Caco-2 (cell line): ENCODE measurements at regions of chr7 and their contacts with region 1.

Region 1: GRCh38 chr7:85890244-85890811 is 703.5 kb upstream of the SEMA3D start:
- DNase-seq: no peak
- H3K4me3 ChIP-seq: no peak overlapping the region
- H3K4me3 Mint-ChIP-seq: no peak overlapping the region
- H3K27ac Mint-ChIP-seq: no peak overlapping the region
- H3K4me1 ChIP-seq: no peaks in the 10 kb centered on the region
- H3K4me1 Mint-ChIP-seq: no peaks in the 10 kb centered on the region
- H3K27me3 ChIP-seq: no peaks in the 10 kb centered on the region
- H3K27me3 Mint-ChIP-seq: peaks cover 3% of the 10 kb centered on the region
- CTCF ChIP-seq: peak; percentile 42 to 52

Region 2: GRCh38 chr7:85997515-85997914 is 107.2 kb after region 1 on chr7:
- CTCF ChIA-PET with region 1: no interaction called
- POLR2A ChIA-PET with region 1: no interaction called
- intact Hi-C with region 1: no loop called
- DNase-seq: no peak
- H3K4me3 ChIP-seq: no peak overlapping the region
- H3K4me3 Mint-ChIP-seq: no peak overlapping the region
- H3K27ac Mint-ChIP-seq: no peak overlapping the region
- H3K4me1 ChIP-seq: no peaks in the 10 kb centered on the region
- H3K4me1 Mint-ChIP-seq: no peaks in the 10 kb centered on the region
- H3K27me3 ChIP-seq: no peaks in the 10 kb centered on the region
- H3K27me3 Mint-ChIP-seq: no peaks in the 10 kb centered on the region
- CTCF ChIP-seq: no peak

Region 3: GRCh38 chr7:86469680-86470295 is 579.5 kb after region 1 on chr7:
- CTCF ChIA-PET with region 1: interaction called, 15 read pairs
- POLR2A ChIA-PET with region 1: no interaction called
- intact Hi-C with region 1: loop called (anchors 1 kb)
- DNase-seq: peak; percentile 66 to 78
- H3K4me3 ChIP-seq: no peak overlapping the region
- H3K4me3 Mint-ChIP-seq: no peak overlapping the region
- H3K27ac Mint-ChIP-seq: no peak overlapping the region
- H3K4me1 ChIP-seq: no peaks in the 10 kb centered on the region
- H3K4me1 Mint-ChIP-seq: no peaks in the 10 kb centered on the region
- H3K27me3 ChIP-seq: no peaks in the 10 kb centered on the region
- H3K27me3 Mint-ChIP-seq: peaks cover 4% of the 10 kb centered on the region
- CTCF ChIP-seq: peak; percentile 76 to 79